SK-N-SH (cell line): ENCODE measurements at regions of chr3 and their contacts with region 1.

Region 1: GRCh38 chr3:186617038-186617946 is 4.4 kb downstream of the AHSG start:
- DNase-seq: peak; percentile 84
- H3K4me3 ChIP-seq: peak overlapping the region in 1 of 2 experiments; percentile 34; a peak in 1 of 4 replicates
- H3K27ac ChIP-seq: no peak overlapping the region
- H3K4me1 ChIP-seq: peaks cover 0 to 7% of the 10 kb centered on the region in 2 experiments; a peak in 2 of 4 replicates
- H3K27me3 ChIP-seq: peaks cover 37% of the 10 kb centered on the region; the same call in 1 of the 2 replicates
- CTCF ChIP-seq: peak; percentile 85
- EP300 ChIP-seq: no peak
- RAD21 ChIP-seq: peak; percentile 69

Region 2: GRCh38 chr3:185983495-185984141 is 633.7 kb before region 1 on chr3:
- CTCF ChIA-PET with region 1: interaction called, 17 read pairs
- POLR2A ChIA-PET with region 1: no interaction called
- DNase-seq: peak; percentile 83
- H3K4me3 ChIP-seq: peak overlapping the region in 1 of 2 experiments; percentile 21; a peak in 1 of 4 replicates
- H3K27ac ChIP-seq: no peak overlapping the region
- H3K4me1 ChIP-seq: peaks cover 0 to 3% of the 10 kb centered on the region in 2 experiments; a peak in 1 of 4 replicates
- H3K27me3 ChIP-seq: no peaks in the 10 kb centered on the region
- CTCF ChIP-seq: peak; percentile 90
- EP300 ChIP-seq: no peak
- RAD21 ChIP-seq: peak; percentile 98

Region 3: DNA sequence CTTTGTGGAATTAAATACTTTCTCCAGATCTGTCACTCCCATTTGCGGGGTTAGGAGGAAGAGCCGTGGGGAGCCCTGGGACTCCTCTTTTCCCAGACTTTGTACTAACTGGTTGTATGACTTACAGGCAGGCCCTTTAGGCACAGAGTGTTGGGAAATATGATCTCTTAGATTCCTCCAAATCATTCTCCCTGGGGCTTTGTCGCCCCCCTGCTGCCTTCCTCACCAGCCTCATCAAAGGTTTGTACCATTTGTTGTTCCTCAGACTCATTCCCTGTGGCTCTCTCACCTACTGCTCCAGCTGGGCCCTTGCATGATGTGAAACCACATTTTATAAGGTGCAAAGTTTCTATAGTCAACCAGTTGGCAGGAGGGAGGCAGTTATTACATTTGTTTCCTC is 129.5 kb before region 1 on chr3:
- CTCF ChIA-PET with region 1: no interaction called
- POLR2A ChIA-PET with region 1: no interaction called
- DNase-seq: no peak
- H3K4me3 ChIP-seq: no peak overlapping the region
- H3K27ac ChIP-seq: no peak overlapping the region
- H3K4me1 ChIP-seq: peaks cover 0 to 5% of the 10 kb centered on the region in 2 experiments; a peak in 1 of 4 replicates
- H3K27me3 ChIP-seq: no peaks in the 10 kb centered on the region; the same call in 1 of the 2 replicates
- CTCF ChIP-seq: no peak
- EP300 ChIP-seq: no peak
- RAD21 ChIP-seq: peak; percentile 18; the same call in 1 of the 2 replicates

Region 4: DNA sequence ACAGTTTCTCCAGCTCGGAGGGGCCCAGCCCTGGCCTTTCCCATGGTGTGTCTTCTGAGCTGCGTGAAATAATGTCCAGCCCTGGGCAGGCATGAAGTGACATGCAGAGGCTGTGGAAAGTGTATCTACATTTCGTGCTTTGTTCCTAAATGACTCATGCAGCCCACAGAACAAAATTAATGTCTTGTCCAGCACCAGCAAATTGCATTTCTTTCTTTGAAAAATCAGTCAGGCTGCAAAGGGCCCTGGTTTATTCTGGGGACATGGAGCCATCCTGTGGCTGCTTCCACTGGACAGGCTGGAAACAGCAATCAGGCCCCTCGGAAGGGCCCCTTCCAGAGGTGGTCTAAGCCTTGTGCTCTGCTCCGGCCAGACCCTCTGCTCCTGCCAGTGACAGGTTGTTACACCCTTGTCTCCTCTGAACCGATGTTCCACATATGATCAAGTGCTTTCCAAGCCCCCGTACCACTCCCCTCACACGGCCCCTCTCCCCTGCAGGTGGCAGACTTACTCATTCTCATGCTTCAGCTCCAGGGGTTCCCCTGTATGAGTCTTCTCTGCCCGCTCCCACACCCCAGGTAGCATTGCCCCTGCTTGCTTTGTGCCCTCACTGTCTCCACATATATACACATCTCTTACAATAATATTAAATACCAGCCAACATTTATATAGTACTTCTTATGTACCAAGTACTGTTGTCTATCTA is 106.8 kb before region 1 on chr3:
- CTCF ChIA-PET with region 1: no interaction called
- POLR2A ChIA-PET with region 1: no interaction called
- DNase-seq: no peak
- H3K4me3 ChIP-seq: no peak overlapping the region
- H3K27ac ChIP-seq: no peak overlapping the region
- H3K4me1 ChIP-seq: peaks cover 0 to 2% of the 10 kb centered on the region in 2 experiments; a peak in 2 of 4 replicates
- H3K27me3 ChIP-seq: no peaks in the 10 kb centered on the region; the same call in 1 of the 2 replicates
- CTCF ChIP-seq: no peak
- EP300 ChIP-seq: no peak
- RAD21 ChIP-seq: no peak

Region 5: GRCh38 chr3:186630950-186631641 is 13.8 kb after region 1 on chr3:
- CTCF ChIA-PET with region 1: interaction called, 51 read pairs
- POLR2A ChIA-PET with region 1: interaction called, 3 read pairs
- DNase-seq: no peak
- H3K4me3 ChIP-seq: no peak overlapping the region
- H3K27ac ChIP-seq: no peak overlapping the region
- H3K4me1 ChIP-seq: no peaks in the 10 kb centered on the region
- H3K27me3 ChIP-seq: peaks cover under 1% of the 10 kb centered on the region; the same call in 1 of the 2 replicates
- CTCF ChIP-seq: no peak
- EP300 ChIP-seq: no peak
- RAD21 ChIP-seq: no peak

Region 6: DNA sequence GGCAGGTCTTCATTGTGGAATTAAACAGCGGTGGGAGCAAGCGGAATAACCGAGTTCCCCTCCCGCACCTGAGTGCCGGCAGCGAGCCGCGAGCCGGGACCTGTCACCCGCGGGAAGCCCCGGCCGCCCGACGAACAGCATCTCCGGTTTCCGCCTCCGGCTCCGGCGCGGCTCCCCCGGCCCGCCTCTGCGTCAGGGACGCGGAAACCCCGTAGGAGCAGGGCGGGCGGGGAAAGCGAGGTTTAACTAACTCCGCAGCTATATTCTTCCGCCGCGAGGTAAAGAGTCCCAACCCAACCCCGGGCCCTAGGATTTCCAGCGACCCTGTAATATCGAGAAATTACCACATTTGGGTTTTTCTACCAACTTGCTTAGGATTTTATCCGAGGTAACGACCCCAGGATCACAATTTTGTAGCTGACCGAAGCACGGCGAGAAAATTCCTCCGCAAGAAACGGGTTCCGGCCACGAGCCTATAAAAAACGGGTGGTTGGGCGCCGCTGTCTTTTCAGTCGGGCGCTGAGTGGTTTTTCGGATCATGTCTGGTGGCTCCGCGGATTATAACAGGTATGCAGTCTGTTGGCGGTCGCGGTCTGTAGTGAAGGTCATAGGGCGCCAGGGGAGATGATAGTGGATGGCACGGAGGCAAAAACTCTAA is 165.9 kb after region 1 on chr3 and contains the start of gene EIF4A2:
- CTCF ChIA-PET with region 1: interaction called, 6 read pairs
- POLR2A ChIA-PET with region 1: interaction called, 31 read pairs
- DNase-seq: peak; percentile 96
- H3K4me3 ChIP-seq: peak within 1 kb of the TSS; percentile 98 to 99
- H3K27ac ChIP-seq: peak within 1 kb of the TSS; percentile 94 to 99
- H3K4me1 ChIP-seq: peaks cover 22 to 28% of the 10 kb centered on the region in 2 experiments; a peak in 3 of 4 replicates
- H3K27me3 ChIP-seq: no peaks in the 10 kb centered on the region
- CTCF ChIP-seq: no peak
- EP300 ChIP-seq: peak in 1 of 2 experiments; percentile 65; a peak in 1 of 4 replicates
- RAD21 ChIP-seq: no peak
- polyA plus RNA-seq, gene EIF4A2: 270 and 410 TPM in 2 replicates

Region 7: GRCh38 chr3:186821429-186822367 is 204.4 kb after region 1 on chr3:
- CTCF ChIA-PET with region 1: interaction called, 119 read pairs
- POLR2A ChIA-PET with region 1: no interaction called
- DNase-seq: peak; percentile 54
- H3K4me3 ChIP-seq: peak overlapping the region in 1 of 2 experiments; percentile 25; a peak in 1 of 4 replicates
- H3K27ac ChIP-seq: peak overlapping the region in 1 of 2 experiments; percentile 45; a peak in 2 of 4 replicates
- H3K4me1 ChIP-seq: no peaks in the 10 kb centered on the region; a peak in 1 of 4 replicates
- H3K27me3 ChIP-seq: no peaks in the 10 kb centered on the region
- CTCF ChIP-seq: peak; percentile 80
- EP300 ChIP-seq: no peak
- RAD21 ChIP-seq: peak; percentile 80

Region 8: DNA sequence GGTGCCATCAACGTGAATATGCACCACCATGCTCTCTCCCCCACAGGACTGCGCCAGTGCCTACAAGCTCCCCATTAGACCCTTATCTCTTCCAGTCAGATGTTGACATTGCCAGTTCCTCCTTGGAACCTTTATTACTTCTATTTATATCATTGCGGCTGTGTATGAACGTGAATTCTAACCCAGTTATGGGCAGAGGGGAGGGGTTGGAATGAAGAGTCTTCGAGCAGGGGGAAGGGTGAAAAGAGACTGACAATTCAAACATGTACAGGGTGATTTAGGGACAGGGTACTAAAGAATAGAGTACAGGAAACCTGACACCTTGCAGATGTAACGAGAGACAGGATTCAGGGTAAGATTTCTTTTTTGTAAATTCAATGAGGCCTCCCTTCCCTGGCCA is 271.3 kb after region 1 on chr3:
- CTCF ChIA-PET with region 1: no interaction called
- POLR2A ChIA-PET with region 1: no interaction called
- DNase-seq: no peak
- H3K4me3 ChIP-seq: no peak overlapping the region
- H3K27ac ChIP-seq: no peak overlapping the region
- H3K4me1 ChIP-seq: no peaks in the 10 kb centered on the region
- H3K27me3 ChIP-seq: no peaks in the 10 kb centered on the region
- CTCF ChIP-seq: no peak
- EP300 ChIP-seq: no peak
- RAD21 ChIP-seq: no peak